ENCODE measurements at regions of chr7 and their contacts with region 1.

Region 1: DNA sequence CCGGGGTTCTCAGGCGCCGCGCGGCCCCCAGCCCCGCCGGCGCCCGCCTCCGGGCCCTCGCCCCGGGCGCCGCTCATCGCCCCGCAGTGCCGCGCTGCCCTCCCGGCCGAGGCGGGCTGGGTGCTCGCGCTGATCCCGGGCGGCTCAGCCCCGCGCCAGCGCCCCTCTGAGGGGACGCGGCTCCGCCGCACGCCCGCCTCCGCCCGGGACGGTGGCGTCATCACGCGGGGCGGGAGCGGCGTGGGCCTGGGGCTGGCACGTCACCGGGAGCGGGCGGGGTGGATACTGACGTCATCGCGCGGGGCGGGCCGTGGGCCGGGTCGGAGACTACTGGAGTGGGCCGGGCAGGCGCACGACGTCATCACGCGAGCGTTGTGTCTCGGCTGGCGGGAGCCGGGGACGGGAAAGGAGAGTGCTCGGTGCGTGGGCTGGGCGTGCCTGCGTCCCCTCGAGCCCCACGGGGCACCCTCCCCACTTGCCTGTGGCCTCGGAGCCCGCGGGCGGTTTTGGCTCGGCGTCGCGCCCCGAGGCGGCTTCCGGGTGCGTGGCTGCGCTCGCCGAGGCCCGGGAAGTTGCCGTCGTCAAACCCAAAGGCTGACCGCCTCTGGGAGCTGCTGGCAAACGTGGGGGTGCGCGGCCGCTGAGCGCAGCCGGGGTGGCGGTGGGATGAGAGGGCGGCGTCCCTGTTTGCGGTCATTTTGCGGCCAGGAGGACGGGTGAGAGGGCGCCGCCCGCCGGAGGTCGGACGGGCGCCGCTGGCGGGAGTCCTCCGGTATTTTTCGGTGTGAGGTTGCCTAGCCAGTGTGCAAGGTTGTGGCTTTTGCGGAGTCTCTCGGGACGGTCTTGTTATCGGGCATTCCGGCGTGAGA is at the start of gene ESYT2:
- DNase-seq: peak; percentile 99 to 100 (median 99)
- ATAC-seq: peak; percentile 93 to 97 (median 96)
- H3K4me3 ChIP-seq: peak within 1 kb of the TSS; percentile 63 to 95 (median 88)
- H3K27ac ChIP-seq: peak within 1 kb of the TSS; percentile 96 to 100 (median 99)
- H3K4me1 ChIP-seq: peaks cover 0 to 40% (median 18%) of the 10 kb centered on the region in 12 donors
- H3K27me3 ChIP-seq: no peaks in the 10 kb centered on the region
- CTCF ChIP-seq: peak in 7 of 12 donors; percentile 4 to 27 (median 18)
- POLR2A ChIP-seq: peak; percentile 84 to 100
- total RNA-seq, gene ESYT2: 42.8 to 91.8 (median 50.9) TPM

Region 2: DNA sequence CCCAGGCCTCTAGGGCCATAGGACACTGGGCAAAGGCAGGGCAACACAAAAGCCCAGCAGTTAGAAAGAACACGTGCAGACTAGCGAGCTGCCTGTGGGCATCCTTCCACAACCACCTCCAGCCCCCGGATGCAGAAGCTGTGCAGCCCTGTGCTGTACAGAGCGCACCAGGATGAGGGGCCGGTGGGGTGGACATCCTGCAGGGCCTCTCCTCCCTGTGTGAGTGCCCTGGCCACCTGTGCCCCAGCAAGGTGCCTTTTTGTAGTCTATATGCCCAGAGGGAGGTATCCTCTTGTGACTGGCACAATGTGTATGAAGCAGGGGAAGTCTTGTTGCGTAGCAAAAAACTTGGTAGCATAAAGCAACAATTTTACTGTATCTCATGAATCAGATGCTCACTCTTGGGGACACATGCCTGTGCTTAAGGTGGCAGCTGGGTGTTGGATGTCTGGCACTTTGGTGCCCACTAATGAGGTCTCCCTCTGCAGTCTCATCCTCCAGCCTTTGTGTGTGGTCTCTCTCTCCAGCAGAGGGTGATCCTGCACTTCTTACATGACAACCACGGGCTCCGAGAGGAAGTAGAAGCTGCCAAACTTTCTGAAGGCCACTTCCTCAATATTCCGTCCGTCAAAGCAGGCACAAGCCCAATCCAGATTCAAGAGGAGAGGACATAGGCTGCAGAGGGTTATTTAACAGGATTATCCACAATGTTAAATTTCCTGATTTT is 133.7 kb before region 1 on chr7:
- intact Hi-C with region 1: loop called in 2 of 10 experiments (anchors 5 to 10 kb)
- DNase-seq: peak in 4 of 5 donors; percentile 71 to 78 (median 74)
- ATAC-seq: peak; percentile 96 to 99 (median 98)
- H3K4me3 ChIP-seq: peak overlapping the region in 4 of 12 donors; percentile 1 to 30 (median 22)
- H3K27ac ChIP-seq: peak overlapping the region in 10 of 12 donors; percentile 1 to 60 (median 27)
- H3K4me1 ChIP-seq: peaks cover 0 to 12% (median 4%) of the 10 kb centered on the region in 12 donors
- H3K27me3 ChIP-seq: no peaks in the 10 kb centered on the region
- CTCF ChIP-seq: peak; percentile 48 to 76 (median 68)
- POLR2A ChIP-seq: no peak

Region 3: GRCh38 chr7:158704704-158705468 is 124.7 kb before region 1 on chr7 and contains the start of gene NCAPG2:
- intact Hi-C with region 1: loop called in 2 of 10 experiments (anchors 5 to 10 kb)
- DNase-seq: peak; percentile 98 to 99 (median 99)
- ATAC-seq: peak; percentile 97 to 99 (median 99)
- H3K4me3 ChIP-seq: peak within 1 kb of the TSS; percentile 68 to 98 (median 82)
- H3K27ac ChIP-seq: peak within 1 kb of the TSS; percentile 33 to 96 (median 88)
- H3K4me1 ChIP-seq: peaks cover 0 to 18% (median 8%) of the 10 kb centered on the region in 12 donors
- H3K27me3 ChIP-seq: no peaks in the 10 kb centered on the region
- CTCF ChIP-seq: peak in 10 of 12 donors; percentile 10 to 44 (median 18)
- POLR2A ChIP-seq: peak; percentile 63 to 97
- total RNA-seq, gene NCAPG2: 2.8 to 12.5 (median 4.7) TPM

Region 4: GRCh38 chr7:158782761-158783401 is 46.7 kb before region 1 on chr7:
- intact Hi-C with region 1: loop called in 8 of 10 experiments (anchors 1 to 5 kb)
- DNase-seq: peak; percentile 73 to 85 (median 83)
- ATAC-seq: peak; percentile 91 to 92 (median 92)
- H3K4me3 ChIP-seq: peak overlapping the region in 7 of 12 donors; percentile 9 to 35 (median 27)
- H3K27ac ChIP-seq: peak overlapping the region; percentile 59 to 90 (median 82)
- H3K4me1 ChIP-seq: peaks cover 0 to 65% (median 36%) of the 10 kb centered on the region in 12 donors
- H3K27me3 ChIP-seq: no peaks in the 10 kb centered on the region
- CTCF ChIP-seq: peak; percentile 16 to 76 (median 52)
- POLR2A ChIP-seq: peak in 1 of 2 donors; percentile 29

Region 5: DNA sequence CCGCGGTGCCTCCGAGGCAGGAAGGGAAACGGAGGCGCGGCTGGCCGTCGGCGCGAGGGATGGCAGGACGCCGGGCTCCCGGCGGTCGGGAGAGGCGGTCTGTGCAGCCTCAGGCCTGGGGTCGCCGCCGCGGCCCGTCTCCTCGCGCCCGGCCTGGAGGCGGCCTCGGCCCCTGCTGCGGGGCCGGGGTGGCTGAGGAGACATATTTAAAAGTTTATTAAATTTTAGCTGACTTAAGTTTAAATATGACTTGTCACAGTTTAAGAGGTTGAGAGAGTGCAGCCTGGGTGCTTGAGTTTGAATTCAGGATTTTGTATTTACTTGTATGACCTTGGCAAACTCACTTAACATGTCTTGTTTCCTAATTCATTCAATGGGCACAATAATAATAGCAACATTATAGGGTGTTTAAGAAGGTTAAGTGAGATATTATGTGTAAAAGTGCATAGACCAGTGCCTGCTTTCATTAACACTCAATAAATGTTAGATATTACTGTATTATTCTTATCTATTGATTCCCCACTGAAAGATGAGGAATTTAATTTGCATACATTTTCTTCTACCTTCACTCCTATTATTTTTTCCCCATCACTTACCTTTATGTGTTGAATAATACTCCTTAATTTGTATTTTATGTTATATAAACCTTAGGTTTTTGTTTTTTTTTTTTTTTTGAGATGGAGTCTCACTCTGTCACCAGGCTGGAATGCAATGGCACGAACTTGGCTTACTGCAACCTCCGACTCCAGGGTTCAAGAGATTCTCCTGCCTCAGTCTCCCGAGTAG is 27.5 kb after region 1 on chr7:
- intact Hi-C with region 1: loop called in 4 of 10 experiments (anchors 2 to 5 kb)
- DNase-seq: no peak
- ATAC-seq: no peak
- H3K4me3 ChIP-seq: peak overlapping the region; percentile 83 to 99 (median 96)
- H3K27ac ChIP-seq: peak overlapping the region; percentile 82 to 98 (median 90)
- H3K4me1 ChIP-seq: peaks cover 11 to 51% (median 19%) of the 10 kb centered on the region in 12 donors
- H3K27me3 ChIP-seq: no peaks in the 10 kb centered on the region
- CTCF ChIP-seq: no peak
- POLR2A ChIP-seq: no peak

Region 6: DNA sequence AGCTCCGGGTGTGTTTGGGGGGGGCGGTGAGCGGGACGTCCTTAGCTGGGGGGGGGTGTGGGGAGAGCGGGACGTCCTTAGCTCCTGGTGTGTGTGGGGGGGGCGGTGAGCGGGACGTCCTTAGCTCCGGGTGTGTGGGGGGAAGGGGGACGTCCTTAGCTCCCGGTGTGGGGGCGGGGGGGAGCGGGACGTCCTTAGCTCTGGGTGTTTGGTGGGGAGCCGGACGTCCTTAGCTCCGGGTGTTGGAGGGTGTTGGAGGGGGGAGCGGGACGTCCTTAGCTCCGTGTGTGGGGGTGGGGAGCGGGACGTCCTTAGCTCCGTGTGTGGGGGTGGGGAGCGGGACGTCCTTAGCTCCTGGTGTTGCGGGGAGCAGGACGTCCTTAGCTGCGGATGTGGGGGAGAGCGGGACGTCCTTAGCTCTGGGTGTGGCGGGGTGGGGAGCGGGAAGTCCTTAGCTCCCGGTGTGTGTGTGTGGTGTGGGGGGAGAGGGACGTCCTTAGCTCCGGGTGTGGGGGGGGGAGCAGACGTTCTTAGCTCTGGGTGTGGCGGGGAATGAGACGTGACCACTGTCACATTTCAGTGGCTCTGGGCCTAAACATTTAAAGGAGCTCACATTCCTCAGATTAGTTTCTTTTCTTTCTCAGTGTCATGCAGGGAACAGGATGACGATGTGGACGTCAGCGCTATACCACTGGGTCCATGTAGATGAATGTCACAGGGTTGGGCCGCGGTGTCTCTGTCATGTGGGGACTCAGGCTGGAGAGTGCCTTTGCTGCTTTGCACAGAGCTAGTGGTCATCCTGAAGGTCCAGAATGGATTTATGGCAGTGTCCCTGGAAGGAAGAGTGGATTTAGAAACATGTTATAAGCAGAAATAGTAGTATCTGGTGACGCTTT is 34.3 kb after region 1 on chr7:
- intact Hi-C with region 1: loop called in 3 of 10 experiments (anchors 5 kb)
- DNase-seq: peak; percentile 82 to 93 (median 89)
- ATAC-seq: peak; percentile 84 to 91 (median 89)
- H3K4me3 ChIP-seq: peak overlapping the region in 11 of 12 donors; percentile 27 to 59 (median 55)
- H3K27ac ChIP-seq: peak overlapping the region; percentile 85 to 98 (median 92)
- H3K4me1 ChIP-seq: peaks cover 4 to 56% (median 30%) of the 10 kb centered on the region in 12 donors
- H3K27me3 ChIP-seq: no peaks in the 10 kb centered on the region
- CTCF ChIP-seq: no peak
- POLR2A ChIP-seq: peak in 1 of 2 donors; percentile 56